Psoas muscle (tissue), 8 donors: ENCODE measurements at regions of chr2 and their contacts with region 1.

Region 1: GRCh38 chr2:85601771-85602475 is 575 bp downstream of the TMEM150A start:
- DNase-seq: peak; percentile 84 to 90
- ATAC-seq: peak; percentile 58 to 74 (median 63)
- H3K4me3 ChIP-seq: peak overlapping the region; percentile 74
- H3K27ac ChIP-seq: peak overlapping the region; percentile 89
- H3K4me1 ChIP-seq: peaks cover 56% of the 10 kb centered on the region
- H3K27me3 ChIP-seq: no peaks in the 10 kb centered on the region
- CTCF ChIP-seq: no peak

Region 2: GRCh38 chr2:85156153-85156552 is 445.8 kb before region 1 on chr2:
- intact Hi-C with region 1: no loop called
- DNase-seq: no peak
- ATAC-seq: no peak
- H3K4me3 ChIP-seq: no peak overlapping the region
- H3K27ac ChIP-seq: no peak overlapping the region
- H3K4me1 ChIP-seq: peaks cover 31% of the 10 kb centered on the region
- H3K27me3 ChIP-seq: no peaks in the 10 kb centered on the region
- CTCF ChIP-seq: no peak

Region 3: GRCh38 chr2:85613717-85614515 is 12.0 kb after region 1 on chr2:
- intact Hi-C with region 1: loop called in 1 of 2 experiments (anchors 2 kb)
- DNase-seq: no peak
- ATAC-seq: no peak
- H3K4me3 ChIP-seq: no peak overlapping the region
- H3K27ac ChIP-seq: peak overlapping the region; percentile 92
- H3K4me1 ChIP-seq: peaks cover 50% of the 10 kb centered on the region
- H3K27me3 ChIP-seq: no peaks in the 10 kb centered on the region
- CTCF ChIP-seq: no peak

Region 4: DNA sequence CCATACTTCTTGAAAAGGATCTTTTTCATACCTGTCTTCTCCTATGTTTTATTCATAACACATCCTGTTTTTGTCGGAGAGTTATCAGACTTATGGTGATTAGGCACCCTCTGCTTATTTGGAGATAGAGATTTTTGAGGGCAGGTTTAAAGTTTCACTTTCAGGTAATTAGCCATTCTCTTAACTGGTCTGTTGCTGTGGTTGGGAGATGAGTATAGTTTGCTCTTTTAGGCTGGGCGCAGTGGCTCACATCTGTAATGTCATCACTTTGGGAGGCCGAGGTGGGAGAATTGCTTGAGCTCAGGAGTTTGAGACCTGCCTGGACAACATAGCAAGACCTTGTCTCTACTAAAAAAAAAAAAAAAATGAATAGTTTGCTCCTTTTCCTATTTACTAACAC is 40.8 kb after region 1 on chr2:
- intact Hi-C with region 1: no loop called
- DNase-seq: no peak
- ATAC-seq: no peak
- H3K4me3 ChIP-seq: no peak overlapping the region
- H3K27ac ChIP-seq: no peak overlapping the region
- H3K4me1 ChIP-seq: no peaks in the 10 kb centered on the region
- H3K27me3 ChIP-seq: no peaks in the 10 kb centered on the region
- CTCF ChIP-seq: no peak

Region 5: DNA sequence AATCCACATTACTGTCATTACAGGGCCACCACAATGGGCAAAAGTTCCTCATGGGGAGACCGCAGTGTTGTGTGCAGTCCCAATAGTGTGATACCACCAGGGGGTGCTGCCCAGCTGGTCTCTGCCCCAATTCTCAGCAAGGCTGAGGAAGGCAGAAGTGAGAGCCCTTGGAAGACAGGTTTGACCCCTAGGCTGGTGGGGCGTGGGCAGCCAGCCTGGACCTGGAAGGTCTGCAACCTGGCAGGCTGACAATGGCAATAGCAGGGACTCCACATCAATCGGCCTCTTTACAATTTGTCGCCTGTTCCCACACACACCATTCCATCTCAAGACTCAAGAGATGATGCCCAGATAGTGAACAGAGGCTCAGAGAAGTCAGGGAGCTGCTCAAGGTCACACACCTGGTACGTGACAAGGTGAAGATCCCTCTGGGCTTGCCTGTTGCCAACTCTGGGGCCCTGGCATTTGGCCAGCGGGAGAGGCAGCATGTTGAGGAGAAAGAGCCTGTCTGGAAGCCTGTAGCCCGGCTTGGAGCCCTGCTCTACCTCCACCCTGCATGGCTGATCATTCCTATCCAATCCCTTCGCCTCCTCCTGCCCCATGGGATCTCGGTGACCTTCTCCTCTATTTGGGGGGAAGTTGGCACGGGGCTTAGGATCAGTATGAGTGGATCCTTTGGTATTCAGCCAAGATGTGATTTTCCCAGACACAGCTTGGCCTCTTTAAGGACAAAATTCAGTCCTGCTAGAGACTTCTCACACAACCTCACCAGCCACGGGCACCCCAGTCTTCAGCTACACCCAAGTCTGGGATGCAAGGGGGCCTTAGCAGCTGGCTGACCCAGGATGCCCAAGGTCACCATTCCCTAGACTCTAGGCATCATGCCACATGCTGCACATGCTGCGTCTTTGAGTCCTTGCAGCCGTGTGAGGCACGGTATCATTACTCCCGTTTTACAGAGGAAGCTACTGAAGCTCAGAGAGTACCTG is 149.0 kb after region 1 on chr2:
- intact Hi-C with region 1: no loop called
- DNase-seq: peak; percentile 75 to 84
- ATAC-seq: peak; percentile 57 to 68 (median 62)
- H3K4me3 ChIP-seq: peak overlapping the region; percentile 1
- H3K27ac ChIP-seq: peak overlapping the region; percentile 30
- H3K4me1 ChIP-seq: peaks cover 45% of the 10 kb centered on the region
- H3K27me3 ChIP-seq: no peaks in the 10 kb centered on the region
- CTCF ChIP-seq: peak; percentile 83